Dendritic cell treated with granulocyte-macrophage colony-stimulating factor and Interleukin-4, amounts not matched to agents 40 ng/mL and 50 ng/mL, for 4 days (primary cell): ENCODE measurements at regions of chr16 and their contacts with region 1.

Region 1: DNA sequence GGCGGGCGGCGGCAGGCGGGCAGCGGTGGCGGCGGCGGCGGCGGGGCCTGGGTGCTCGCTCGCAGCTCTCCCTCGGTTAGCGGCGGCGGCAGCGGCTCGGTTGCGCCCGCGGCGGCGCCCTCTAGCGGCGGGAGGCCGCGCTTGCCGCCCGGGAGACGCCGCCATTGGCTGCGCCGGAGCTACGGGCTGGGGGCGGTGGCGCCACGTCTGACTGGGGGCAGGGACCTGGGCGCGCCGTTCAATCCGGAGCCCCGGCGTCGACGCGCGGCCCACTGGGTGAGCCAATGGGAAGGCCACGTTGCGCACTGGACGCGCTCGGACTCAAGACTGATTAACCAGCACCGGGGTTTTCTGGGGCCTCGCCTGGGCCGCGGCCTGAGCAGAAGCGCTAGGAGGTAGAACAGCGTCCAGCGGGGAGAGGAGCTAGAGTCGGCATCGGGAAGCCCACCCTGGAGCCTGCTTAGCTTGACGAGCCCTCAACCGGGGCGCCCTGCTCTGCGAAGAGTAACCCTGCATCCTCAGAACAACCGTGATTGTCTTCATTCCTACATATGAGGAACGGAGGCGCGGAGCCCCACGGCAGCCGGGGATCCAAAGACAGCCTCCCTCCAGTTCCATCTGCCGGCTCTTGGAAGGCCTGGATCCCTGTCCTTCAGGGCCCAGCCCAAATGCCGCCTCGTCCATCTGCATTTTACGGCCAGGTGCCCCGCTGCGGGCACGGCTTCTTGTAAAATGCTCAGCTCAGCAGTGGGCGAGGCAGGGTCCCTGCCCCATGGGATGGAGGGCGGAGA is at the start of gene ZC3H7A:
- H3K4me3 Mint-ChIP-seq: peak within 1 kb of the TSS; percentile 97
- H3K27ac Mint-ChIP-seq: peak within 1 kb of the TSS; percentile 95
- H3K4me1 Mint-ChIP-seq: peaks cover 78% of the 10 kb centered on the region
- H3K27me3 Mint-ChIP-seq: no peaks in the 10 kb centered on the region

Region 2: GRCh38 chr16:11742539-11743307 is 54.6 kb before region 1 on chr16 and contains the start of gene TXNDC11:
- intact Hi-C with region 1: loop called (anchors 5 kb)
- H3K4me3 Mint-ChIP-seq: peak within 1 kb of the TSS; percentile 92
- H3K27ac Mint-ChIP-seq: peak within 1 kb of the TSS; percentile 96
- H3K4me1 Mint-ChIP-seq: peaks cover 54% of the 10 kb centered on the region
- H3K27me3 Mint-ChIP-seq: no peaks in the 10 kb centered on the region

Region 3: DNA sequence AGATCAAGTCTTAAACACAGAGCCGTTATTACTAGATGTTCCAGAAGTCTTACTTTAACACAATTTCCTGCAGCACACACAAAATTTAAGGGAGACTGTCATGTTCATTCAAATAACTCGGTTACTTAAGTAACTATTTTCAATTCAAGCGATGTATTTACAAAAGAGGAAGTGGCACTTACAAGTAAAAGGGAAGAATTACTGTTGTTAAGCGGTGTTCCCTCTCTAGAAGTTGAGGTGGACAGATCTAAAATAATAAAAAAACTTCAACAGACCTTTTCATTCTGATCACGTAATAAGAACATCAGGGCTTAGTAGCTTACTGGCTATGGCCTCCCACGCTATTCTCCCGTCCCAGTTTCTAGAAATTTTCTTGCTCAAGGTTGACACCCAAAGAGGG is 28.5 kb before region 1 on chr16:
- intact Hi-C with region 1: no loop called
- H3K4me3 Mint-ChIP-seq: peak overlapping the region; percentile 62
- H3K27ac Mint-ChIP-seq: peak overlapping the region; percentile 60
- H3K4me1 Mint-ChIP-seq: peaks cover 13% of the 10 kb centered on the region
- H3K27me3 Mint-ChIP-seq: no peaks in the 10 kb centered on the region

Region 4: GRCh38 chr16:11783319-11784037 is 13.9 kb before region 1 on chr16:
- intact Hi-C with region 1: loop called (anchors 2 kb)
- H3K4me3 Mint-ChIP-seq: peak overlapping the region; percentile 57
- H3K27ac Mint-ChIP-seq: peak overlapping the region; percentile 88
- H3K4me1 Mint-ChIP-seq: peaks cover 42% of the 10 kb centered on the region
- H3K27me3 Mint-ChIP-seq: no peaks in the 10 kb centered on the region

Region 5: GRCh38 chr16:11819798-11820197 is 22.4 kb after region 1 on chr16:
- intact Hi-C with region 1: loop called (anchors 2 kb)
- H3K4me3 Mint-ChIP-seq: no peak overlapping the region
- H3K27ac Mint-ChIP-seq: no peak overlapping the region
- H3K4me1 Mint-ChIP-seq: peaks cover 37% of the 10 kb centered on the region
- H3K27me3 Mint-ChIP-seq: no peaks in the 10 kb centered on the region

Region 6: GRCh38 chr16:11851294-11852091 is 54.1 kb after region 1 on chr16 and contains the start of gene RSL1D1:
- intact Hi-C with region 1: loop called (anchors 5 kb)
- H3K4me3 Mint-ChIP-seq: peak within 1 kb of the TSS; percentile 90
- H3K27ac Mint-ChIP-seq: peak within 1 kb of the TSS; percentile 94
- H3K4me1 Mint-ChIP-seq: peaks cover 39% of the 10 kb centered on the region
- H3K27me3 Mint-ChIP-seq: no peaks in the 10 kb centered on the region